Ascending aorta (tissue), 2 donors: ENCODE measurements at regions of chr6 and their contacts with region 1.

Region 1: DNA sequence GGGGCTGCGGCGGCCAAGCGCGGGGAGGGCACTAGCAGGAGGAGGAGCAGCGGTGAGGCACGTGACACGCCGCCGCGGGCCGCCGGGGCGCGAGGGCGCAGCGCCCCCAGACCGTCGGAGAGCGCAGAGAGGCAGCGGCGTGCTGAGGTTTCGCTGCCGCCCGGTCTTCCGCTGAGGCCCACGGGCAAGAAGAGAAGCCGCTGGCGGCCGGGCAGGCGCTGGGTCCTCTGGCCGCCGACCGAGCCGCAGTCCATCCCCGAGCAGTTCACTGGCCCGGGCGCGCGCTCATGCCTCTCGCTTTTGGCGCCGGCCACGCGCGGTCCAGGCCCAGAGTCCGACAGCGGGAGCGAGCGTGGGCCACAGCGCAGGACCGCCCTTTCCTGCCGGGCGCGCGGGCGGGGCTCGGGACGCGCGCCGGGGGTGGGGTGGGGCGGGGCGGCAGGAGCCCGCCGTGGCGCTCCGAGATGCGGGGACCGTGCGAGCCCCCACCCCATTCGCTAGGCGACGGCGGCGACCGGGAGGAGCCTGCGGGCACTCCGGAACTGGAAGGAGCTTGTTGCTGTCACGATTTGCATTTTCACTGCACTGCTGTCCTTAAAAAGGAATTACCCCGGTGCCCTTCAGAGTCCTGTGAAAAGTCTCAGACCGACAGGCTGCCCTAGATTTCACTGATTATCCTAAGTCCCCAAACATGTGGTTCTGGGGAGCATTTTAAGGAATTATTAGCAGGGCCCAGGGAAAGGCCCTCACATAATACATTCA is at the start of gene MCUR1:
- DNase-seq: peak; percentile 41 to 93
- H3K4me3 ChIP-seq: peak within 1 kb of the TSS; percentile 84 to 97
- H3K27ac ChIP-seq: peak within 1 kb of the TSS; percentile 95
- H3K4me1 ChIP-seq: peaks cover 5 to 28% of the 10 kb centered on the region in 2 donors
- H3K27me3 ChIP-seq: no peaks in the 10 kb centered on the region
- CTCF ChIP-seq: peak in 1 of 3 experiments; percentile 21
- total RNA-seq, gene MCUR1: 2.8 TPM

Region 2: GRCh38 chr6:13336553-13336952 is 477.8 kb before region 1 on chr6:
- intact Hi-C with region 1: loop called (anchors 10 kb)
- DNase-seq: peak; percentile 14 to 80
- H3K4me3 ChIP-seq: no peak overlapping the region
- H3K27ac ChIP-seq: no peak overlapping the region
- H3K4me1 ChIP-seq: no peaks in the 10 kb centered on the region
- H3K27me3 ChIP-seq: no peaks in the 10 kb centered on the region
- CTCF ChIP-seq: peak; percentile 84 to 96 (median 91)

Region 3: DNA sequence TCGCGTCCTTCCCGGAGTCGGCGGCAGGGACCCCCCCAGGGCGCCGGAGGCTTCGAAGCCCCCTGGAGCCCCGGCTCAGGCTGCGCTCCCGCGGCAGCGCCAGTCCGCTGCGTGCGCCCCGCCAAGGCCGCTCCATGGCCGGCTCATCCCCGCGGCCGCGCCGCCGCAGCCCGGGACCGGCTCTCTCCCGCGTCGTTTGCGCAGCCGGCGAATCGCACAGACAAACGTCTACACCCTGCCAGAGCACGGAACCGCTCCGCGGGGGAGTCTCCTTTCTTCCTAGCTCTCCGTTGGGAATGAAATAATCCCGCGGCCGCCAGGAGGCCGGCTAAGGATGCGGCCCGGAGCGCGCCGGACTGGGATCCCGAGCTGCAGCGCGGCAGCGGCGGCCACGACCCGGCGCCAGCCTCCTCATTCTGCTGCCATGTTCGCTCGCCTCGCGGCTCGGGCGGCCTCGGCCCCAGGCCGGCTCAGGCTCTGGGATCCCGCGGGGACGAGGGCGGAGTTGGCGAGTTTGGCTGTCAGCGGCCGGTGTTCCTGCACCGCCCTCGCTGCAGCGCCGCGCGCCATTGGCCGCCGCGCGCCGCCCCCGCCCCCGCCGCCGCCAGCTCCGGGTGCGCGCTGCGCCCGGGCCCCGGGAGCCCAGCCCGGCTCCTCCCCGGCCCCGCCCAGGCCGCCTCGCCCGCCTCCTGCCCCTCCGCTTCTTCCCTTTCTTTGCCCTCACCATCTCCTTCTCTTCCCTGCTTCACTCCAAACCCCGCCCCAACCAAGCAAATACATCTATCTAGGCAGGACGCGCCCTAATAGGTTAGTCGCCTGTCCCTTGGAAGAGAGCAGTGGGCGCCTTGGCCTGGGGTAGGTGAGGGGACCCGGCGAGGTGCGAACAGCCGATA is 327.0 kb before region 1 on chr6 and contains the start of gene GFOD1:
- intact Hi-C with region 1: loop called (anchors 1 kb)
- DNase-seq: peak; percentile 50 to 93
- H3K4me3 ChIP-seq: peak within 1 kb of the TSS; percentile 90 to 94
- H3K27ac ChIP-seq: peak within 1 kb of the TSS; percentile 89 to 96
- H3K4me1 ChIP-seq: peaks cover 4% of the 10 kb centered on the region in 2 donors
- H3K27me3 ChIP-seq: no peaks in the 10 kb centered on the region
- CTCF ChIP-seq: peak in 1 of 3 experiments; percentile 9
- total RNA-seq, gene GFOD1: 28.7 TPM

Region 4: GRCh38 chr6:13614926-13615798 is 199.2 kb before region 1 on chr6 and contains the start of gene NOL7:
- intact Hi-C with region 1: loop called (anchors 1 kb)
- DNase-seq: peak; percentile 84 to 98
- H3K4me3 ChIP-seq: peak within 1 kb of the TSS; percentile 82 to 97
- H3K27ac ChIP-seq: peak within 1 kb of the TSS; percentile 92 to 95
- H3K4me1 ChIP-seq: peaks cover 0 to 17% of the 10 kb centered on the region in 2 donors
- H3K27me3 ChIP-seq: no peaks in the 10 kb centered on the region
- CTCF ChIP-seq: peak; percentile 83 to 96 (median 87)
- total RNA-seq, gene NOL7: 32.2 TPM

Region 5: DNA sequence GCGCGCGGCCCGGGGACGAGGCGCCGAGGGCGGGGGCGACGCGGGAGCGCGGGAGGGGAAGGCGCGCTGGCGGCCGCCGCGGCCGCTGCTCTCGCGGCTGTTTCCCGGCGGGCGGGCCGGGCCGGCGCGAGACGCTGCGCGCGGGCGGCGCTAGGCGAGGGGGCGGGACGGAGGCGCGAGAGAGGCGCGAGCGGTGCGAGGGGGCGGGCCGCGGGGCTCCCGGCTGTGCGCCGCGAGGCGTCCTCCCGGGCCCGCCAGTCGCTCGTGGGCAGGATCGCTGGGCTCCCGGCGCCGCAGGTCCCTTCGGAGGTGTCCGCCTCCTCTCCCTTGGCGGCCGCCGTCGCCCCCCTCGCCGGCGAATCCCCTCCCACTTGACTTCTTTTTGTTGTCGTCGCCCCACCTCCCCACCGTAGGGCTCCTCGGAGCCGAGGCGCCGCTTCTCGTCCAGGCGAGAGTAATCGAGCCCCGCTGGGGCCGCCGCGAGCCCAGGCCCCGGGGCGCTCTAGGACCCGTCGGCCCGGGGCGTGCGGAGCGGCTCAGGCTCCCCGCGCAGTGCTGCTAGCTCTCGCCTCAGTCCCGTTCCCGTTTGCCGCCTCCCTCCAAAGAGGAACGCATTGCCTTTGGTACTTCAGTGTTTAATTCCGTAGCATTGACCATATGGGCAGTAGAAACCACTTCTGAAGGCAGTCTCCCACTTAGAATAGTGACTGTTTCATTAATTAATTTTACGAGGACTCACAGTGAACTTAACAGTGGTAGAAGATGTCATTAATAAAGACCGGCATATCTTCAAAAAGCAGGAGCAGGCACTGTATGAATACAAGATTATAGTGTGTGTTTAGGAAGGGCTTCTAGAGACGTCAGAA is 102.4 kb before region 1 on chr6 and contains the start of gene RANBP9:
- intact Hi-C with region 1: loop called (anchors 2 kb)
- DNase-seq: peak; percentile 54 to 93
- H3K4me3 ChIP-seq: peak within 1 kb of the TSS; percentile 91 to 95
- H3K27ac ChIP-seq: peak within 1 kb of the TSS; percentile 98 to 100
- H3K4me1 ChIP-seq: peaks cover 0 to 20% of the 10 kb centered on the region in 2 donors
- H3K27me3 ChIP-seq: no peaks in the 10 kb centered on the region
- CTCF ChIP-seq: peak in 2 of 3 experiments; percentile 0 to 6
- total RNA-seq, gene RANBP9: 26.3 TPM

Region 6: DNA sequence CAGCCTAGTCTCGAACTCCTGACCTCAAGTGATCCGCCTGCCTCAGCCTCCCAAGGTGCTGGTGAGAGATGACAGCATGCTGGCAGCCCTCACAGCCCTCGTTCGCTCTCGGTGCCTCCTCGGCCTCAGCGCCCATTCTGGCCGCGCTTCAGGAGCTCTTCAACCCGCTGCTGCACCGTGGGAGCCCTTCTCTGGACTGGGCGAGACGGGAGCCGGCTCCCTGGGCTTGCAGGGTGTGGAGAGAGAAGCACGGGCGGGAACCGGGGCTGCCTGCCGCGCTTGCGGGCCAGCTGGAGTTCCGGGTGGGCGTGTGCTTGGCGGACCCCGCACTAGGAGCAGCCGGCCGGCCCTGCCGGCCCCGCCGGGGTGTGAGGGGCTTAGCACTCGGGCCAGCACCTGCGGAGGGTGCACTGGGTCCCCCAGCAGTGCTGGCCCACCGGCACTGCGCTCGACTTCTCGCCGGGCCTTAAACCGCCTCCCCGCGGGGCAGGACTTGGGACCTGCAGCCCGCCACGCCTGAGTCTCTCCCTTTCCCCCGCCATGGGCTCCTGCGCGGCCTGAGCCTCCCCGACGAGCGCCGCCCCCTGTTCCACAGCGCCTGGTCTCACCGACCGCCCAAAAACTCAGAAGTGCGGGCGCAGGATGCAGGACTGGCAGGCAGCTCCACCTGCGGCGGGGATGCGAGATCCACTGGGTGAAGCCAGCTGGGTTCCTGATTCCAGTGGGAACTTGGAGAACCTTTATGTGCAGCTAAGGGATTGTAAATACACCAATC is 71.2 kb before region 1 on chr6:
- intact Hi-C with region 1: no loop called
- DNase-seq: peak in 1 of 2 donors; percentile 62
- H3K4me3 ChIP-seq: peak overlapping the region in 1 of 2 donors; percentile 50
- H3K27ac ChIP-seq: no peak overlapping the region
- H3K4me1 ChIP-seq: no peaks in the 10 kb centered on the region
- H3K27me3 ChIP-seq: no peaks in the 10 kb centered on the region
- CTCF ChIP-seq: no peak

Region 7: DNA sequence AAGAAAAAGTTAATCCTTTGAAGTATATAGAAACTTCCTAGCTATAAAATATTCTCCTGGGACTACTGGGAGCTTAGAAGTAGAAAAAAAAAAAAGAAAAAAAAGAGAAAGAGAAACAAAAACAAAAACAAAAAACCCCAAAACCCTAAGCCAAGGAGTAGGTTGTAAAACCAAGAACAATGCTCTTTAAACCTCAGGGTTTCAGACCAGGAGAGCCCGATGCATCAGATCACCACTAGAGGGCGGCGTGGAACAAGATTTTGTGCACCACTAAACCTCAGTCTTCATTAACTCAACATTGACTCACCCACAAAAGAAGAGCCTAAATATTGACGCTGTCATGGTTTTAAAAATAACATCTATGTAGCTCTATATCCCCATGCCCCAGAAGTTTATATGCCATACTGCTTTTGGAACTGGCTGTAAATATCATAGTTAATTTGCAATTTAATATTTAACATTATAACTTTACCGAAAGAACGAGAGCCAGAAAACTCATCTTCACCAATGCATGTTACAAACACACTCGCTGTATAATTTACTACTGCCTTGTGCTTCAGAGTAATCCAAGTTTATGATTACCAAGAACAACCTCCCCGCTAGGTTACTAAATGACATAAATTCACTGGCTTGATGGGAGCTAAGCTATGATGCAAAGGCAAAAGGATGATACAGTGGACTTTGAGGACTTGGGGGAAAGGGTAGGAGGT is 19.2 kb before region 1 on chr6:
- intact Hi-C with region 1: loop called (anchors 2 kb)
- DNase-seq: peak in 1 of 2 donors; percentile 90
- H3K4me3 ChIP-seq: no peak overlapping the region
- H3K27ac ChIP-seq: no peak overlapping the region
- H3K4me1 ChIP-seq: peaks cover 0 to 3% of the 10 kb centered on the region in 2 donors
- H3K27me3 ChIP-seq: no peaks in the 10 kb centered on the region
- CTCF ChIP-seq: peak; percentile 72 to 95 (median 86)

Region 8: DNA sequence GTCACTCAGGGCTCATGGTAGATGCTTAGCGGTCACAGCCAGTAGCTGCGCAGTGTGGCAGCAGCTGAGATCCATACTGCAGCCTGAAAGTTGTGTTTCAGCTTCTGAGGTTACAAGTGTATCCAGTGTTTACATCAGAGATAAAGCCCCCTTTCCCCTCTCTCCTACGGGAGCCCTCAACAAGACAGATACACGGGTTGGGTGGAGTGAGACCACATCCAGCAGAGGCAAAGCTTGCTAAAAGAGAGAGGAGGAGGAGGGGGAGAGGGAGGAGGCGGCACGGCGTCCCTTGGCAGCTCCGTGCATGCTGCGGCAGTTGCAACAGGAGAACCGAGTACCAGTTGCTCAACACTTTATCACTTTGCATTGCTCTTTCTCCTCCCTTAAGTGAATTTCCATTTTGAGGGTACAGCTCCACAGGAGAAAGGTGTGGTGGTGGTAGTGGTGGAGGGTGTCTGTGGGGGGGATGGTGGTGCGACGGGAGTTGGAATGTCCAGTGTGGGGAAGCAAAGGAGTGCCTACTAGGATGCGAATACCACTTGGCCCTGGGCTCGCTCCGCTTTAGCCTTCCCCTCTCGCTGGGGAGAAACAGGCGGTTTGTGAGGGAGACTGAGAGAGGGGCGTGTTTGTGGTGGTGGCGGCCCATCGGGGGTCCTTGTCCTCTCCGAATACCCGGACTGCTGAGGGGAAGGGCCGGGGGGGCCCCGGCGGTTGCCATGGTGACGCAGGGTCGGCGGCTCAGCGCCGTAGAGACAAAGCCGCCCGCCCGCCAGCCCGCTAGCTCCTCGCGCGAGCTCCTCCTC is 110.0 kb after region 1 on chr6:
- intact Hi-C with region 1: loop called (anchors 5 kb)
- DNase-seq: peak in 1 of 2 donors; percentile 63
- H3K4me3 ChIP-seq: peak overlapping the region; percentile 49 to 63
- H3K27ac ChIP-seq: no peak overlapping the region
- H3K4me1 ChIP-seq: peaks cover 4 to 14% of the 10 kb centered on the region in 2 donors
- H3K27me3 ChIP-seq: peaks cover 9% of the 10 kb centered on the region
- CTCF ChIP-seq: no peak